ENCODE measurements at regions of chr6 and their contacts with region 1.

Region 1: DNA sequence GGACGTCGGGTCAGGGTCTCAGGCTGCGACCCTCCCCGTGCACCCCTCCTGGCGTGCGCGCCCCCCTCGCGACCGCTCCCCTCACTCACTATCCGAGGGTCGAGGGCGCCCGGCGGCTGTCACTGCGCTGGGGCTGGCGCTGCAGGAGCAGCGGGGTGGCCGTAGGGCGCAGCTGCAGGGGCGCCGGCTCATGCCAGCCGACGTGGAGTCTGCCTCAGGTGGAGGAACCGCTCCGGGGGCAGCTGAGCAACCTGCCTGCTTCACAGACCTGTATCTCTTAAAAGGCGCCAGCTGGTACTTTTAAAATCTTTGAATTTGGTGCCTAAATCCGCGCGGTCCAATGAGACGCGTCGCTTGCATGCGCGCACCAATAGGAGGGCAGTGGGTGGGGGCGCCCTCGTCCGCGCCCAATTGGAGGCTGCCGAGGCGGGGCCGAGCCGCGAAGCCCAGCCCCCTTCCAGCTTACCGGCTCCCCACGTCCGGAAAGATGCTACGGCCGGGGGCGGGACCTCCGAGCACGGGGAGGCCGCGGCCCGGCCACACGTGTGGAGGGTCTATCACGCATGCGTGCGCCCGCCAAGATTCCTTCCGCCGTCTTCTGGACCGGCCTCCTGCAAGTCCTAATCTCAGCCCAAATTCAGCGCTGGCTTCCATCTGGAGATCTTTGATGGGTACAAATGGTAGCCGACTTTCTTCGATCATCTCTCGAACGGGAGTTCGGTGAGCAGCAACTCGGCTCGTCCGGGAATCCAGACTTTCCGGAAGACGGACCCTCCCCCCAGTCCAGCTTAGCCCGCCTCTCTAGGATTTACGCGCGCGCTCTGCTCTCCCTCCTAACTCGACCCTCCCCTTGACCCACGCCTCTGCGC is at the start of gene FBXO5:
- DNase-seq: peak; percentile 85
- ATAC-seq: peak; percentile 87
- H3K4me3 ChIP-seq: peak within 1 kb of the TSS; percentile 92
- H3K27ac ChIP-seq: peak within 1 kb of the TSS; percentile 90
- H3K4me1 ChIP-seq: peaks cover 5% of the 10 kb centered on the region
- H3K27me3 ChIP-seq: no peaks in the 10 kb centered on the region
- CTCF ChIP-seq: no peak
- EP300 ChIP-seq: no peak
- POLR2A ChIP-seq: peak; percentile 79
- RAD21 ChIP-seq: no peak
- polyA plus RNA-seq, gene FBXO5: 13.6 to 19.3 TPM

Region 2: GRCh38 chr6:151340219-151340978 is 1642.6 kb before region 1 on chr6:
- CTCF ChIA-PET with region 1: no interaction called
- POLR2A ChIA-PET with region 1: no interaction called
- RAD21 ChIA-PET with region 1: no interaction called
- SMC1A ChIA-PET with region 1: no interaction called
- in situ Hi-C with region 1: no loop called
- intact Hi-C with region 1: no loop called
- DNase-seq: no peak
- ATAC-seq: no peak
- H3K4me3 ChIP-seq: no peak overlapping the region
- H3K27ac ChIP-seq: no peak overlapping the region
- H3K4me1 ChIP-seq: no peaks in the 10 kb centered on the region
- H3K27me3 ChIP-seq: no peaks in the 10 kb centered on the region
- CTCF ChIP-seq: no peak
- EP300 ChIP-seq: no peak
- POLR2A ChIP-seq: no peak
- RAD21 ChIP-seq: no peak

Region 3: GRCh38 chr6:151390276-151391032 is 1592.5 kb before region 1 on chr6:
- CTCF ChIA-PET with region 1: no interaction called
- POLR2A ChIA-PET with region 1: no interaction called
- RAD21 ChIA-PET with region 1: no interaction called
- SMC1A ChIA-PET with region 1: no interaction called
- in situ Hi-C with region 1: no loop called
- intact Hi-C with region 1: loop called (anchors 5 kb)
- DNase-seq: peak; percentile 94
- ATAC-seq: peak; percentile 87
- H3K4me3 ChIP-seq: peak overlapping the region; percentile 82; the same call in 1 of the 2 replicates
- H3K27ac ChIP-seq: peak overlapping the region; percentile 95
- H3K4me1 ChIP-seq: peaks cover 29% of the 10 kb centered on the region
- H3K27me3 ChIP-seq: no peaks in the 10 kb centered on the region
- CTCF ChIP-seq: no peak
- EP300 ChIP-seq: no peak
- POLR2A ChIP-seq: peak; percentile 88
- RAD21 ChIP-seq: no peak

Region 4: DNA sequence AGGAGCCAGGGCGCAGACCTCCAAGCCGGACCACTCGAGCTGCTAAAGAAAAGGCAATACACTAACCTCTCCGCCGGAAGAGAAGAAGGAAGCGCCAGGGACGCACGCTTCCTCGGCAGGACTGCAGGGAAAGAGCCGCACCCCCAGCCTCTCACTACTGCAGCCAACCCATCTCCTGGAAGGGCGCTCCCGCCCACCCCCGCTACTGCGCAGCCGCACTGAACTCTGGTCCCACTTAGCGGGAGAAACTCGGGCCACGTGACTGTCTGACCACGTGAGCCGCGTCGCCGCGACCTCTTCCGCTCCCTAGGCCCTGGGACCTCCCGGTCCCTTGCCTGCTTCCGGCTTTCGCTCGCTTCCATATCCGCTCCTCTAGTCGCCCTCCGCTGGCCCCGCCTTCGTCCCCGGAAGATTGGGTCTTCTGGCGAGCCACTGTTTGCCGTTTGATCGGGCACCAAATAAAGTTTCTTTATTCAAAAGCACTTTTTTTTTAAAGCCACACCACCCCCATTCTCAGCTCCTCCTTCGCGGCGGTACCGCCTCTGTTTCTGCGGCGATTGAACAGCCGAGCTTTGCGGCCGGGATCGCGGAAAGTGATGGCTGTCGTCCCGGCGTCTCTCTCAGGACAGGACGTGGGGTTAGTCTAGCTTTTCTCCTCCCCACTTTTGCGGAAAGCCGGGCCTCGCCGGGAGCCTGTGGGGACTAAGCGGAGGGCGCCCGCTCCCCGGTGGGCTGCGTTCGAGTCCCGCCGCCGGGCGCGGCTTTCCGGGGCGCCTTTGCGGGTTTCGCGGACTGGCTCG is 1530.9 kb before region 1 on chr6 and contains the start of gene RMND1:
- CTCF ChIA-PET with region 1: no interaction called
- POLR2A ChIA-PET with region 1: no interaction called
- RAD21 ChIA-PET with region 1: no interaction called
- SMC1A ChIA-PET with region 1: no interaction called
- in situ Hi-C with region 1: loop called (anchors 25 kb)
- intact Hi-C with region 1: loop called (anchors 5 kb)
- DNase-seq: peak; percentile 99
- ATAC-seq: peak; percentile 97
- H3K4me3 ChIP-seq: peak within 1 kb of the TSS; percentile 85
- H3K27ac ChIP-seq: peak within 1 kb of the TSS; percentile 89
- H3K4me1 ChIP-seq: peaks cover 3% of the 10 kb centered on the region
- H3K27me3 ChIP-seq: no peaks in the 10 kb centered on the region
- CTCF ChIP-seq: no peak
- EP300 ChIP-seq: peak in 1 of 2 experiments; percentile 33; a peak in 2 of 4 replicates
- POLR2A ChIP-seq: peak; percentile 87
- RAD21 ChIP-seq: no peak
- polyA plus RNA-seq, gene RMND1: 18.9 to 24.0 TPM

Region 5: DNA sequence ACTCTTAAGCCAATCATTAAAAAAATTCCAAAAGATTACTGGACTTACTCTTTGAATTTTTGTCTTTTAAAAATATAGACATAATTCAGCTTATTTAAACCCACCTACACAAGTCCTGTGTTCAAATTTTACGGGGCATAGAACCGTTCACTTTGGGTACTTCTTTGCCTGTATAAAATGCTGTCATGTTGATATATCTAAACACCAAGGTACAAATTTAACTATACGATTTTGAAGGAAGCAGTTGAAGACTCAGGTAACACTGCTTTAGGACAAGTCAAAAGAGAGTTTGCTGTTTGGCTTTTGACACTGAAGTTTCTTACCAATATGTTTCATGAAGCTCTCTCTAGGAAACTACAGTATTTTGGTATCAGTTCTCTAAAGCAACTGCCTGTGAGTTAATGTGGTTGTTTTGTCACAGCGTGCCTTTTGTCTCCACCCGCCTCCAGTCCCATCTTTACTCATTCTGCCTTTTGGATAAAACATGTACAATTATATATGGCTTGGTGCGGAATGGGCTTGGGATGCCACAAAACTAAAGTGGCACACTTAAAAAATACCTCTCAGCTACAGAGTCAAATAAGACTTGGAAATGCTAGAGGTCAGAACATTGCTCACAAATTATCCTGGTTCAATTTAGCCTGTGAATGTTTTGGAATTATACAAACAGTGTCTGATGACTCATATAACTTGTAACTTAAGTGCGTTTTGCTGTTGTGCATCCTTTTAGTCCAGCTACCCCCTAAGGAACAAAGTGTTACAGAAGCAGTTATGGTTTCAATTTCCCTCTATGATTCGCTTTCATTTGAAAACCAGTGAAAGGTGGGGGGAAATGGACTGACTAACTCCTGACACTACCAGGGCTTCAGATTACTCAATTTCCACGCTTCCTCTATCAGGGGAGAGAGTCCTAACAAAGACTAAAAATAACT is 109.3 kb after region 1 on chr6:
- CTCF ChIA-PET with region 1: interaction called, 3 read pairs
- POLR2A ChIA-PET with region 1: no interaction called
- RAD21 ChIA-PET with region 1: interaction called, 4 read pairs
- SMC1A ChIA-PET with region 1: interaction called, 4 read pairs
- in situ Hi-C with region 1: no loop called
- intact Hi-C with region 1: loop called (anchors 5 kb)
- DNase-seq: peak; percentile 43
- ATAC-seq: peak; percentile 91
- H3K4me3 ChIP-seq: 0 out of 2 replicates have a peak overlapping the region, but pooled peaks have one; percentile 44
- H3K27ac ChIP-seq: peak overlapping the region; percentile 10; the same call in 1 of the 2 replicates
- H3K4me1 ChIP-seq: no peaks in the 10 kb centered on the region; the same call in 1 of the 2 replicates
- H3K27me3 ChIP-seq: no peaks in the 10 kb centered on the region
- CTCF ChIP-seq: no peak
- EP300 ChIP-seq: peak in 1 of 2 experiments; percentile 45; a peak in 2 of 4 replicates
- POLR2A ChIP-seq: no peak
- RAD21 ChIP-seq: no peak

Region 6: GRCh38 chr6:153192943-153193885 is 210.2 kb after region 1 on chr6:
- CTCF ChIA-PET with region 1: no interaction called
- POLR2A ChIA-PET with region 1: no interaction called
- RAD21 ChIA-PET with region 1: no interaction called
- SMC1A ChIA-PET with region 1: no interaction called
- in situ Hi-C with region 1: no loop called
- intact Hi-C with region 1: no loop called
- DNase-seq: no peak
- ATAC-seq: no peak
- H3K4me3 ChIP-seq: no peak overlapping the region
- H3K27ac ChIP-seq: no peak overlapping the region
- H3K4me1 ChIP-seq: no peaks in the 10 kb centered on the region
- H3K27me3 ChIP-seq: no peaks in the 10 kb centered on the region
- CTCF ChIP-seq: no peak
- EP300 ChIP-seq: no peak
- POLR2A ChIP-seq: no peak
- RAD21 ChIP-seq: no peak

Region 7: GRCh38 chr6:154733012-154733625 is 1750.1 kb after region 1 on chr6 and contains the start of gene SCAF8:
- CTCF ChIA-PET with region 1: no interaction called
- POLR2A ChIA-PET with region 1: no interaction called
- RAD21 ChIA-PET with region 1: no interaction called
- SMC1A ChIA-PET with region 1: no interaction called
- in situ Hi-C with region 1: loop called (anchors 25 kb)
- intact Hi-C with region 1: no loop called
- DNase-seq: peak; percentile 23
- ATAC-seq: peak; percentile 87
- H3K4me3 ChIP-seq: peak within 1 kb of the TSS; percentile 88
- H3K27ac ChIP-seq: peak within 1 kb of the TSS; percentile 96
- H3K4me1 ChIP-seq: peaks cover 5% of the 10 kb centered on the region; the same call in 1 of the 2 replicates
- H3K27me3 ChIP-seq: no peaks in the 10 kb centered on the region
- CTCF ChIP-seq: peak; percentile 73 to 91 (median 73); a peak in 5 of 6 replicates
- EP300 ChIP-seq: peak in 1 of 2 experiments; percentile 45; a peak in 1 of 4 replicates
- POLR2A ChIP-seq: peak; percentile 93
- RAD21 ChIP-seq: peak; percentile 50
- polyA plus RNA-seq, gene SCAF8: 8.1 to 8.5 TPM

Measured in GM12878 (cell line).